ENCODE measurements at regions of chr10 and their contacts with region 1.

Region 1: DNA sequence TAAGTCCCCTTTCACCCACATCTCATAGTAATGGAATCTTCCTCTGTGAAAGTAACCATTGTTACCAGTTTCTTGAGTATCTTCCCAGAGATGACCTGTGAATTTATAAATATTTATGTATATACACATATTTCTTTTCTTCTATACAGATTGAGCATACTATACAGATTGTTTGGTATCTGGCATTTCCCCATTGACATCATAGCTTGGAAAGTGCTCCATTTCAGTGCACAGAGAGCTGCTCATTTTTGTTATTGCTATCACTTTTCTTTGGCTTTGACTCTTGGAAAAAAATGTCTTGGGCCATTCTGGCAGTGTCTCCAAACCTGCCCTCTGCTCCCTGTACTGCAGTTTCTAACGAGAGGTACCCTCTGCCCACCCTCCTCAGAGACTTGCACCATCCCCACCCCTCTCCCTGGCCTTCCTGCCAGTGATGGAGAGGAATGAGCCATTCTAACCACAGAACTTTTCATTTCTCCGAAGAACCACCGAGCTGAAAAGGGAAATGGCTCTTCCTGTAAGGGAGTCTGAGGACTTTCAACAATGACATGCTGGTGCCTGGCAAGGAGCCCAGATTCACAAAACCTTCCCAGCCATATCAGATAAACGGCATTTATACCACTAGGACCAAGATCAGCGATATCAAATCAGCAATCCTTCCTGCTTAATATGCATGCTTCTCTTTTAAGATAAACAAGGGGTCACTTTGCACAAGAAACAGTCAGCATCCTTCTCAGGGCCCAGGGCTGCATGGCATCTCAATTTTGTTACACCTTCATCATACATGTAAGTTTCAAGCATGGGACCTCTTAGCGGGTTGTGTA is 19.7 kb upstream of the CCSER2 start:
- DNase-seq: peak; percentile 81
- H3K4me3 Mint-ChIP-seq: peak overlapping the region; percentile 33
- H3K27ac Mint-ChIP-seq: peak overlapping the region; percentile 57
- H3K4me1 Mint-ChIP-seq: peaks cover 31% of the 10 kb centered on the region
- H3K27me3 Mint-ChIP-seq: peaks cover 3% of the 10 kb centered on the region

Region 2: GRCh38 chr10:84237199-84238051 is 71.3 kb before region 1 on chr10:
- intact Hi-C with region 1: no loop called
- DNase-seq: no peak
- H3K4me3 Mint-ChIP-seq: no peak overlapping the region
- H3K27ac Mint-ChIP-seq: no peak overlapping the region
- H3K4me1 Mint-ChIP-seq: no peaks in the 10 kb centered on the region
- H3K27me3 Mint-ChIP-seq: peaks cover 4% of the 10 kb centered on the region

Region 3: DNA sequence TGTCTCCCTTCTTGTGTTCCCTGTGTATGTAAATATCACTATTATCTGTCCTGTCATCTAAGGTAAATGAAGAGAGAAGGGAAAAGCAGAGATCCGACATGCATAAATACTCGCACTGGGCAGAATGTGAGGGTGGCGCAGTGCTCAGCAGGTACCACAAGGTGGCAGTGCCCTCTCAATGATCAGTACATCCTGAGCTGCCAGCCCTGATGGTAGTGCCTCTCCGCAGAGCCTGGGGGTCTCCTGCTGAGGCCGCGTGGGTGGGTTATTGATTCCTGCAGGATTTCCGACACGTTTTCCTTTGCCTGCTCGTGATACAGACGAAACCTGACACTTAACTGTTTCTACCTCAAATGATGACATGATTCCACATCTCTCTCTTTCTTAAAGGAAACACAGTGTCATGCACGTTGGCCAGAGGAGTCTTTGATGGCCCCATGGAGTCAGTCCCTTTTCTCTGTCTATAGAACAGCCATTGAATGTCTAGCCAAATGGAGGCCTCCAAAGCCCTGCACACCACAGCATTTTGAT is 44.0 kb before region 1 on chr10:
- intact Hi-C with region 1: loop called (anchors 5 kb)
- DNase-seq: peak; percentile 91
- H3K4me3 Mint-ChIP-seq: no peak overlapping the region
- H3K27ac Mint-ChIP-seq: no peak overlapping the region
- H3K4me1 Mint-ChIP-seq: peaks cover 16% of the 10 kb centered on the region
- H3K27me3 Mint-ChIP-seq: peaks cover 20% of the 10 kb centered on the region

Region 4: DNA sequence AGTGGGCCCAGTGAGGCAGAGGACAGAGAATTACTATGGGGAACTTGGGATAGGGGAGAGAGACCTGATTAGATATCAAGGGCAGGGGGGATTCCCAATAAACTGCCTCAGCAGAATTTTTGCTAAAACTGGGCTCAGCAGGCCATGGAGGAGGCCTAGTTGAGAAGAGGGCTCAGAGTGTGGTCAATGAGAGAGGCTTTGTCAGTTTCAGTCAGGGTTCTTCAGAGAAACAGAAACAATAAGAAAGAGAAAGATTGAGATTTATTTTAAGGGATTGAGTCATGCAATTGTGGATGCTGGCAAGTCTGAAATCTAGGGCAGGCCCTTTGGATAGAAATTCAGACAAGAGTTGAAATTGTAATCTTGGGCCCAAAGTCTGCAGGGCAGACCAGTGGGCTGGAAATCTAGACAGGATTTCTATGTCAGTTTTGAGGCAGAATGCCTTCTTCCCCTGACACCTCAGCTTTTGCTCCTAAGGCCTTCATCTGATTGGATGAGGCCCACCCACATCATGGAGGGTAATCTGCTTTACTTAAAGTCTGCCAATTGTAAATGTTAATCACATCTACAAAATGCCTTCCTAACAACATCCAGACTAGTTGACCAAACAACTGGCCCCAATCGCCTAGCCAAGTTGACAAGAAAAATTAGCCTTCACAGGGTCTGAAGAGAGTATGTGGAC is 13.8 kb before region 1 on chr10:
- intact Hi-C with region 1: loop called (anchors 2 kb)
- DNase-seq: peak; percentile 63
- H3K4me3 Mint-ChIP-seq: no peak overlapping the region
- H3K27ac Mint-ChIP-seq: no peak overlapping the region
- H3K4me1 Mint-ChIP-seq: peaks cover 26% of the 10 kb centered on the region
- H3K27me3 Mint-ChIP-seq: peaks cover 17% of the 10 kb centered on the region

Measured in activated CD4-positive, alpha-beta T cell treated with anti-CD3 and anti-CD28 coated beads, Interleukin-2, amount 10 ng/mL, durations not matched to agents 24 days and 14 days (primary cell).